Heart left ventricle (tissue), 16 donors: ENCODE measurements at regions of chr11 and their contacts with region 1.

Region 1: DNA sequence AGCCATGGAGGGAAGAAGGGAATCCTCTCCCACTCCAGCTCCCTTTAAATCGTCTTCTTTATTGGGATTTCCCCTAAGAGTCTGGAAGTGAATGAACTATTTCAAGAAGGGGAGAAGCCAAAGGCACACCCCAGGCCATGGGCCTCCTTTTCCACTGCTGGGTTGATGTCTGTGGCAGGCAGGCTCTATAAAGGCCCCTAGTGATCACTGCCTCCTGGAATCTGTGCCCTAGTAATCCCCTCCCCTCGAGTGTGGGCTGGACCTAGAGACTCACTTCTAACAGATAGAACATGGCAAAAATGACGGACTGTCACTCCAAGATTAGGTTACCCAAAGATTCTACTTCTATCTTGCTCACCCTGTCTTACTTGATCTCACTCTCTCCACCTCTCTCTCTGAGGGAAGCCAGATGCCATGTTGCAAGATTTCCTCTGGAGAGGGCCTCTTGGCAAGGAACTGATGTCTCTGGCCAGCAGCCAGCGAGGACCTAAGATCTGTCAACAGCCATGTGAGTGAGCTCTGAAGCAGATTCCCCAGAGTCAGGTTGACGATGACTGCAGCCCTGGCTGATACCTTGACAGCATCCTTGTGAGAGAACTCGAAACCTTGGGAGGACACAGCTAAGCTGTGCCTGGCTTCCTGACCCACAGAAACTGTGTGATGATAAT is 444.8 kb downstream of the SOX6 start:
- DNase-seq: peak; percentile 32 to 77 (median 72)
- ATAC-seq: peak; percentile 28 to 73 (median 43)
- H3K4me3 ChIP-seq: no peak overlapping the region
- H3K27ac ChIP-seq: peak overlapping the region in 1 of 12 donors; percentile 45
- H3K4me1 ChIP-seq: peaks cover 0 to 25% (median 7%) of the 10 kb centered on the region in 12 donors
- H3K27me3 ChIP-seq: no peaks in the 10 kb centered on the region
- CTCF ChIP-seq: no peak
- POLR2A ChIP-seq: no peak

Region 2: DNA sequence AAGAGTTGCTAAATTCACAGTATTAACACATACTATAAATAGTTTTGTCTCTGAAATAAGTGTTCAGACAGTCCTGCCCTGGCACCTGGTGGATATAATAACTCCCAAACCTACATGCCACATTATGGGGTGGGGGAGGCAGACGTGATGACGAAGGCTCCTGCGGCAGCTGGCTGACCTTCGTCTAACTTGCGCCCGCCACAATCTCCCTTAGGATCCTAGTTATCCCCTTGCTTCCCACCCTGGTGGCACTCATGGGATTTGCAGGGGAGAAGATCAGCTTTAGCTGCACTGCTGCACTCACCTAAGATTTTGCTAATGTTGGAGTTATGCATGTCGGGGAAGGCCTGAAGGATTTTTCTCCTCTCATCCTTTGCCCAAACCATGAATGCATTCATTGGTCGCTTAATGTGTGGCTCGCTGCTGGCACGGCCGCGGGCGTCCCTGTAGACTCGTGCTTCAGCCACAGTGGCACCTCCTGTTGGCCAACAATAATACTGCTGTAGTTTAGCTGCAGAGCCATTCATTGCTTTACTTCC is 77.3 kb after region 1 on chr11:
- intact Hi-C with region 1: loop called in 1 of 10 experiments (anchors 5 kb)
- DNase-seq: peak in 1 of 5 donors; percentile 46
- ATAC-seq: peak; percentile 72 to 86 (median 76)
- H3K4me3 ChIP-seq: no peak overlapping the region
- H3K27ac ChIP-seq: no peak overlapping the region
- H3K4me1 ChIP-seq: peaks cover 0 to 21% (median 9%) of the 10 kb centered on the region in 12 donors
- H3K27me3 ChIP-seq: no peaks in the 10 kb centered on the region
- CTCF ChIP-seq: peak in 11 of 12 donors; percentile 7 to 41 (median 32)
- POLR2A ChIP-seq: no peak